ENCODE measurements at regions of chr1 and their contacts with region 1.

Region 1: DNA sequence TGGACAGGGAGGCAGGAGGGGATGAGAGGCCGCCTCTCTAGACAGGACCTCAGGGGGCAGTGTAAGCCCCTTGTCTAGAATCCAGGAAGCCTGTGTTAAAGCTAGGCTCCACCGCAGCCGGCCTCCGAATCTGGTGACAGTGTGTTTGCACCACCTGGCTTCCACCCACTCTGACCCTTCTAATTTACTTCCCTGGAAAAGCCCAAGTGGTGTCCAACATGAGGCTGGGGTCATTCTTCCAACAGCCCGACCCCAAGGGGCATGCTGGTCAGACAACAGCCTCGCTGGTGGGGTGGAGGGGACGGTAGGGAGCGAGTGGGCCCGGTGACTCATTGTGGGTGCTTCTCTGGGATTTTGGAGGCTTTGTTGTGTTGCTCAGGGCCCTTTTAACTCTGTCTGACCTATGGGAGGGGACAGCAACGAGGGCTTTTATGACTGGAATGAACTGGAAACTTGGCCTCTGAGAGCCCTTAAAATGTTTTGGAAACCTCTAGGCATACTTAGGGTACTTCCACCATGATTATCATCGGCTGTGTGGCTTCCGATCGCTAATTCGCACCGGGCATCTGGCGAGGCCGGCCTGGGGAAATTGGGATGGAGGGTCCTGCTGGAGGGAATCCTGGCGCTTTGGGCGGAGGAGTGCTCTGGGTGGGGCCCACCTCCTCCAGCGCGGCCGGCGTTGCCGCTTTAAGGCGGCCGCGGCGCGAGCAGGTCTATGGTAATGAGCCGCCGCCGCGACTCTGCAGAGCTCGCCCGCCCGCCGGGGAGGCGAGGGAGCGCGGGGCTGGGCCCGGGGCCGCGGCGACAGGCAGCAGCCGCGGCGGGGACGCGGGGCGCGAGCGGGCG is at the start of gene CELSR2:
- DNase-seq: peak; percentile 88
- ATAC-seq: peak; percentile 84
- H3K4me3 Mint-ChIP-seq: peak within 1 kb of the TSS; percentile 63
- H3K27ac Mint-ChIP-seq: no peak within 1 kb of the TSS
- H3K4me1 Mint-ChIP-seq: peaks cover 24% of the 10 kb centered on the region
- H3K27me3 Mint-ChIP-seq: peaks cover 36% of the 10 kb centered on the region
- CTCF ChIP-seq: no peak
- total RNA-seq, gene CELSR2: 26.8 to 31.3 TPM (median 28.2 TPM) in 3 replicates

Region 2: GRCh38 chr1:109061183-109061582 is 187.8 kb before region 1 on chr1:
- CTCF ChIA-PET with region 1: no interaction called
- POLR2A ChIA-PET with region 1: no interaction called
- DNase-seq: no peak
- ATAC-seq: no peak
- H3K4me3 Mint-ChIP-seq: no peak overlapping the region
- H3K27ac Mint-ChIP-seq: peak overlapping the region; percentile 15; the same call in 1 of the 2 replicates
- H3K4me1 Mint-ChIP-seq: no peaks in the 10 kb centered on the region
- H3K27me3 Mint-ChIP-seq: no peaks in the 10 kb centered on the region
- CTCF ChIP-seq: no peak

Region 3: DNA sequence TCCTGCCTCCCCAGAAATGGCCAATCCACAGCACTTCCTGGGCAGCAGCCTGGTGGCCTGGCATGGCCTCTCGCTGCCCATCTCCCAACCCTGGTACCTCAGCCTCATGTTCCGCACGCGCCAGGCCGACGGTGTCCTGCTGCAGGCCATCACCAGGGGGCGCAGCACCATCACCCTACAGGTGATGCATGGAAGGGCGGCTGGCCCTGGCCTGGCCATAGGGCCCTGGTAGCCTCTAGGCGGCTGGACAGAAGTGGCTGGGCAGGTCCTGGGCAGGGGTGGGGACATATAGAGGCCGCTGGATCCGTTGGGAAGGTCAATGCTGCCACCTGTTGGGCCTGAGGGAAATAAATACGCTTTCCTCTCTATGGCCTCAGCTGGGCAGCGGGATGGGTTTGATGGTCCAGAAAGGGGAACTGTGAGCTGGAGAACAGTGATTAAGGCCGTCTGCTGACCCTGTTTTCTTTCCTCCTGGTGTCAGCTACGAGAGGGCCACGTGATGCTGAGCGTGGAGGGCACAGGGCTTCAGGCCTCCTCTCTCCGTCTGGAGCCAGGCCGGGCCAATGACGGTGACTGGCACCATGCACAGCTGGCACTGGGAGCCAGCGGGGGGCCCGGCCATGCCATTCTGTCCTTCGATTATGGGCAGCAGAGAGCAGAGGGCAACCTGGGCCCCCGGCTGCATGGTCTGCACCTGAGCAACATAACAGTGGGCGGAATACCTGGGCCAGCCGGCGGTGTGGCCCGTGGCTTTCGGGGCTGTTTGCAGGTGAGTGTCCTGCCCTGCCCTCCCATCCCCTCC is 14.8 kb after region 1 on chr1:
- CTCF ChIA-PET with region 1: interaction called, 22 read pairs
- POLR2A ChIA-PET with region 1: interaction called, 3 read pairs
- DNase-seq: peak; percentile 96
- ATAC-seq: peak; percentile 93
- H3K4me3 Mint-ChIP-seq: no peak overlapping the region
- H3K27ac Mint-ChIP-seq: no peak overlapping the region
- H3K4me1 Mint-ChIP-seq: peaks cover 21% of the 10 kb centered on the region
- H3K27me3 Mint-ChIP-seq: no peaks in the 10 kb centered on the region
- CTCF ChIP-seq: peak; percentile 97